ENCODE measurements at regions of chr14 and their contacts with region 1.

Region 1: GRCh38 chr14:21103710-21104447 is 3.0 kb downstream of the TMEM253 start:
- DNase-seq: peak; percentile 71
- H3K4me3 ChIP-seq: peak overlapping the region; percentile 93
- CTCF ChIP-seq: peak; percentile 90

Region 2: GRCh38 chr14:20989572-20990551 is 114.0 kb before region 1 on chr14 and contains the start of gene METTL17:
- CTCF ChIA-PET with region 1: interaction called, 48 read pairs
- POLR2A ChIA-PET with region 1: no interaction called
- DNase-seq: peak; percentile 91
- H3K4me3 ChIP-seq: peak within 1 kb of the TSS; percentile 87
- CTCF ChIP-seq: peak; percentile 45

Region 3: DNA sequence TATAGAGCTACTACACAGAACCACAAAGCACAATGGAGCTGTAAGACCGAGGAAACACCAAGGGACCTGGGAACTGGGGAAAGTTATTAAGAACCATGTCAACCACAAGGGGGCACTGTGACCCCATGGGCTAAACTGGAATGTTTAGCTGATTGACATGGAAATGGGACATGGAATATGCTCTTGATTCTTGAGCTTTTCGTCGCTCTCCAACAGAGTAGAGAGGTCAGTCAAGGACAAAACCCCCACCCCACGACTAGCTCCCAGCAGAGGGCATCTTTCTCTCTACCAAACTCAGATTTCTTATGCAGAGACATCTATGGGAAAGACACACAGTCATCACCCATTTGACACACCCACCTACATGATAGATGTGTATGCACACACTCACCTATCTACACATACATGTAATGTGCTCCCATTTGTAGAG is 89.1 kb before region 1 on chr14:
- CTCF ChIA-PET with region 1: interaction called, 684 read pairs
- POLR2A ChIA-PET with region 1: interaction called, 10 read pairs
- DNase-seq: peak; percentile 23
- H3K4me3 ChIP-seq: no peak overlapping the region
- CTCF ChIP-seq: peak; percentile 82

Region 4: GRCh38 chr14:21049271-21049673 is 54.6 kb before region 1 on chr14:
- CTCF ChIA-PET with region 1: interaction called, 62 read pairs
- POLR2A ChIA-PET with region 1: no interaction called
- DNase-seq: no peak
- H3K4me3 ChIP-seq: no peak overlapping the region
- CTCF ChIP-seq: no peak

Region 5: GRCh38 chr14:21071225-21072030 is 32.5 kb before region 1 on chr14:
- CTCF ChIA-PET with region 1: interaction called, 300 read pairs
- POLR2A ChIA-PET with region 1: interaction called, 16 read pairs
- DNase-seq: no peak
- H3K4me3 ChIP-seq: peak overlapping the region; percentile 81
- CTCF ChIP-seq: no peak

Region 6: GRCh38 chr14:21121106-21121505 is 17.2 kb after region 1 on chr14:
- CTCF ChIA-PET with region 1: interaction called, 49 read pairs
- POLR2A ChIA-PET with region 1: no interaction called
- DNase-seq: no peak
- H3K4me3 ChIP-seq: no peak overlapping the region
- CTCF ChIP-seq: no peak